CD8-positive, alpha-beta memory T cell (primary cell): ENCODE measurements at regions of chr1 and their contacts with region 1.

Region 1: GRCh38 chr1:60978421-60979357 is 103.7 kb upstream of the NFIA start:
- DNase-seq: peak; percentile 4 to 66 (median 20)
- H3K4me3 ChIP-seq: no peak overlapping the region
- H3K4me3 Mint-ChIP-seq: no peak overlapping the region
- H3K27ac ChIP-seq: no peak overlapping the region
- H3K27ac Mint-ChIP-seq: peak overlapping the region in 1 of 8 donors; percentile 15
- H3K4me1 ChIP-seq: no peaks in the 10 kb centered on the region
- H3K4me1 Mint-ChIP-seq: peaks cover 0 to 4% (median 0%) of the 10 kb centered on the region in 3 donors
- H3K27me3 ChIP-seq: no peaks in the 10 kb centered on the region
- H3K27me3 Mint-ChIP-seq: peaks cover 0 to 3% of the 10 kb centered on the region in 2 donors

Region 2: DNA sequence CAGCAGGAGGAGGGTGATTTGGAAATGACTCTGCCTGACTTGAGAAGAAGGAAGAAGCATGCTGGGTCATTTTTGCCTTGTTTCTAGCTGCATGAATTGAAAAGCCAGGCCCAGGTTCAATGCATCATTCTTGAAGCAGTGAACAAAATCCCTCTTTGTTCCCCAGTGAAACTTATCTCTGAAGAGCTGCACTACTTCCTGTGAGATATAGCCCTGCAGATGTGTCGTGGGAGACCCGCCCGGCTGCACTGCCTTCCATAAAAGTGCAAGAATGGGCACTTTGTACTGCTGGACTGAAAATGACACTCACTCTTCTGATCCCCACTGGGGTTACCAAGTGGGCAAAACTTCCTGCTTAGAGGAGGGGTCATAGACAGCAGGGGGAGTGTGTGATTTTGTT is 145.5 kb before region 1 on chr1:
- CTCF ChIA-PET with region 1: no interaction called
- POLR2A ChIA-PET with region 1: no interaction called
- DNase-seq: no peak
- H3K4me3 ChIP-seq: no peak overlapping the region
- H3K4me3 Mint-ChIP-seq: peak overlapping the region in 2 of 7 donors; percentile 16 to 20
- H3K27ac ChIP-seq: no peak overlapping the region
- H3K27ac Mint-ChIP-seq: peak overlapping the region in 1 of 8 donors; percentile 52
- H3K4me1 ChIP-seq: no peaks in the 10 kb centered on the region
- H3K4me1 Mint-ChIP-seq: peaks cover 4 to 16% (median 12%) of the 10 kb centered on the region in 3 donors
- H3K27me3 ChIP-seq: no peaks in the 10 kb centered on the region
- H3K27me3 Mint-ChIP-seq: peaks cover 9 to 39% of the 10 kb centered on the region in 2 donors

Region 3: DNA sequence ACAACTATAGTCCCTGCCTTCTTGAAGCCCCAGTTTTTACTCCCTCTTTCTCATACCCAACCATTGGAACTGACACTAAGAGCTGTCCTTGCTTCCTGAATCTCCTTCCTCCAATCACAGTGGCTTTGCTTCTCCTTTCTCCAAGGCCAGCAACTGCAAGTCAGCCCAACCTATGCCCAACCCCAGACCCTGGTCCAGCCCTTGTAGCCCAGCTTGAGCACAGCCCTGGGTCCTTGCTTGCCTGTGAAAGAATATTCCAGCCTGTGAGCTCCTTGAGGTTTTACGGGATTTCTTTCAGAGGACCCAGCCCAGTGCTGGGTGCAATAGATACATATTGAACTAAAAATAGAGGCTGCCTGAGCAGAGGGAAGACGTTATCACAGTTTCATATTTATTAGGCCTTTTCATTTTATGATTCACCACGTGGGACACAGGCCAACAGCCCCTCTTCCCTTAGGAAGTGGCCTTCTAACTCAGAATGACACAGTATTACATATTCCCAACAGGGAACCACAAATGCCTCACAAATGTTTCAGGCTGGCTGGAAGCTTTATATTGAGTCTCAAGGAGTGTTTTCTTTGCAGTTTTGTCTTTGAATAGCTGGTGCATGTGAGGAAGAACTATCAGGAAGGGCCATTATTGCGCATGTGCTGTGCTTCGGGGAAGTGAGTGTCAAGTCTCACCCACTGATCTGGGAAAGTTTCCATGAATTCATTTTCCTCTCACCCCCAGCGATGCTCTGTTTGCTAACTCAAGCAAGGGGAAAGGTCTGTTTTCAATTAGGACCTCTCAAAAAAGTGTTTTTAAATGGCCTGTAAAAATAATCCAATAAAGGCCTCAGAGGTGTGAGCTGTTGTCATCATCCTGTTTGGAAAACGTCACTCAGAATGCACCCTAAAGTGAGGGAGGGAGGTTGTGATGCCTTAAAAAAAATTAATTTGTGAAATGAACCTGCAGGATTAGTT is 11.3 kb after region 1 on chr1:
- CTCF ChIA-PET with region 1: interaction called, 14 read pairs
- POLR2A ChIA-PET with region 1: no interaction called
- DNase-seq: no peak
- H3K4me3 ChIP-seq: no peak overlapping the region
- H3K4me3 Mint-ChIP-seq: no peak overlapping the region
- H3K27ac ChIP-seq: no peak overlapping the region
- H3K27ac Mint-ChIP-seq: no peak overlapping the region
- H3K4me1 ChIP-seq: no peaks in the 10 kb centered on the region
- H3K4me1 Mint-ChIP-seq: no peaks in the 10 kb centered on the region
- H3K27me3 ChIP-seq: no peaks in the 10 kb centered on the region
- H3K27me3 Mint-ChIP-seq: peaks cover 0 to 8% of the 10 kb centered on the region in 2 donors

Region 4: GRCh38 chr1:61043010-61043820 is 64.5 kb after region 1 on chr1:
- CTCF ChIA-PET with region 1: interaction called, 18 read pairs
- POLR2A ChIA-PET with region 1: no interaction called
- DNase-seq: peak; percentile 72 to 87 (median 76)
- H3K4me3 ChIP-seq: peak overlapping the region; percentile 50
- H3K4me3 Mint-ChIP-seq: peak overlapping the region; percentile 54 to 94 (median 84)
- H3K27ac ChIP-seq: no peak overlapping the region
- H3K27ac Mint-ChIP-seq: peak overlapping the region in 2 of 8 donors; percentile 29 to 79
- H3K4me1 ChIP-seq: peaks cover 5% of the 10 kb centered on the region
- H3K4me1 Mint-ChIP-seq: peaks cover 3 to 10% (median 5%) of the 10 kb centered on the region in 3 donors
- H3K27me3 ChIP-seq: peaks cover 8% of the 10 kb centered on the region
- H3K27me3 Mint-ChIP-seq: peaks cover 24 to 25% of the 10 kb centered on the region in 2 donors

Region 5: GRCh38 chr1:61077676-61078541 is 99.2 kb after region 1 on chr1:
- CTCF ChIA-PET with region 1: no interaction called
- POLR2A ChIA-PET with region 1: no interaction called
- DNase-seq: peak; percentile 83 to 95 (median 94)
- H3K4me3 ChIP-seq: peak overlapping the region; percentile 61
- H3K4me3 Mint-ChIP-seq: peak overlapping the region; percentile 89 to 98 (median 93)
- H3K27ac ChIP-seq: peak overlapping the region; percentile 83
- H3K27ac Mint-ChIP-seq: peak overlapping the region; percentile 92 to 98 (median 97)
- H3K4me1 ChIP-seq: peaks cover 43% of the 10 kb centered on the region
- H3K4me1 Mint-ChIP-seq: peaks cover 44 to 50% (median 49%) of the 10 kb centered on the region in 3 donors
- H3K27me3 ChIP-seq: no peaks in the 10 kb centered on the region
- H3K27me3 Mint-ChIP-seq: peaks cover 0 to 5% of the 10 kb centered on the region in 2 donors

Region 6: DNA sequence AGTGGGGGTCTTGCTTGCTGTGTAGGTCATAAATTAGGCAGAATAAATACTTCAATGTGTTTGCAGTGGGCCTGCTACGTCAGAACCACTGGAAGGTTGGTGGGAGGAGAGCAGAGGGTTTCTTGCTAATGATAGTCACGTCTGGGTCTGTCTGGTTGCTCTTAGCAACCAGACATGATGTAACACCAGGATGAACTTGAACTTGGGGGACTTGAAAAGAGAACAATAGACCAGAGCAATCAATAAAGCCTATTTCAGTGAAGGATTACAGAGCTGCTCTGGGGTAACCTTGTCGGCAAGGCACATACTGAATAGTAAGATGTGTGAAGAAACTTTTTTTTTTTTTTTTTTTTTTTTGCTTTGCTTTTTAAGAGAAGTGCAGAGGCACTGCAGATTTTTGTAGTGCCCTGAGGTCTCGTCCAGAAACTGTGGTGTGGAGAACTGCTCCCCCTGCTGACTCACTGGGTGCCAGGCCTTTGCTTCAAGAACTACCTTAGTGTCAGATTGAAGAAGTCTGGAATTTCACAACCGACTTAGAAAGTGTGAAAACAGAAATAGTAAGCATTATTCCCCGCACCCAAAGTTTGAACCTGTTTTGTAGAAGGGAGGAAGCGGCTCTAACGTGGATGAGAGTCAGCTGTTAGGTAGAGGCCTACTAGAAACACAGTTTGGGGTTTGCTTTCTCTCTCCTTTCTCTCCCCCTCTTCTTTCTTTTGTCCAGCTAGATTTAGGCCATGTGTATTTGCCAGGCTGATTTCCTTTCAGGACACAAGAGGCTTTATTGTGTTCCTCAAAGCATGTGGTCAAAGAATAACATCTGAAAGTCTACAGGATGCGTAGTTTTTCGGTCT is 474.6 kb after region 1 on chr1:
- CTCF ChIA-PET with region 1: interaction called, 11 read pairs
- POLR2A ChIA-PET with region 1: no interaction called
- DNase-seq: peak; percentile 42 to 83 (median 52)
- H3K4me3 ChIP-seq: no peak overlapping the region
- H3K4me3 Mint-ChIP-seq: peak overlapping the region in 2 of 7 donors; percentile 37 to 60
- H3K27ac ChIP-seq: no peak overlapping the region
- H3K27ac Mint-ChIP-seq: peak overlapping the region; percentile 35 to 97 (median 82)
- H3K4me1 ChIP-seq: no peaks in the 10 kb centered on the region
- H3K4me1 Mint-ChIP-seq: peaks cover 6 to 21% (median 8%) of the 10 kb centered on the region in 3 donors
- H3K27me3 ChIP-seq: no peaks in the 10 kb centered on the region
- H3K27me3 Mint-ChIP-seq: no peaks in the 10 kb centered on the region